Naive thymus-derived CD4-positive, alpha-beta T cell (primary cell): ENCODE measurements at regions of chr4 and their contacts with region 1.

Region 1: GRCh38 chr4:101347557-101348366 is 436 bp upstream of the PPP3CA start:
- DNase-seq: peak; percentile 95 to 99 (median 98)
- ATAC-seq: peak; percentile 92
- H3K4me3 ChIP-seq: peak overlapping the region; percentile 99
- H3K4me3 Mint-ChIP-seq: peak overlapping the region; percentile 93 to 99 (median 98)
- H3K27ac ChIP-seq: peak overlapping the region; percentile 78
- H3K27ac Mint-ChIP-seq: peak overlapping the region; percentile 86 to 96 (median 93)
- H3K4me1 ChIP-seq: peaks cover 7 to 15% of the 10 kb centered on the region in 2 donors
- H3K4me1 Mint-ChIP-seq: peaks cover 23 to 40% (median 35%) of the 10 kb centered on the region in 7 donors
- H3K27me3 ChIP-seq: no peaks in the 10 kb centered on the region
- H3K27me3 Mint-ChIP-seq: peaks cover 5 to 63% (median 17%) of the 10 kb centered on the region in 5 donors

Region 2: GRCh38 chr4:100450449-100450848 is 897.3 kb before region 1 on chr4:
- CTCF ChIA-PET with region 1: no interaction called
- POLR2A ChIA-PET with region 1: no interaction called
- intact Hi-C with region 1: loop called in 1 of 2 experiments (anchors 10 kb)
- DNase-seq: no peak
- ATAC-seq: no peak
- H3K4me3 ChIP-seq: no peak overlapping the region
- H3K4me3 Mint-ChIP-seq: no peak overlapping the region
- H3K27ac ChIP-seq: no peak overlapping the region
- H3K27ac Mint-ChIP-seq: no peak overlapping the region
- H3K4me1 ChIP-seq: no peaks in the 10 kb centered on the region
- H3K4me1 Mint-ChIP-seq: peaks cover 0 to 4% (median 0%) of the 10 kb centered on the region in 7 donors
- H3K27me3 ChIP-seq: no peaks in the 10 kb centered on the region
- H3K27me3 Mint-ChIP-seq: peaks cover 0 to 6% (median 4%) of the 10 kb centered on the region in 5 donors

Region 3: DNA sequence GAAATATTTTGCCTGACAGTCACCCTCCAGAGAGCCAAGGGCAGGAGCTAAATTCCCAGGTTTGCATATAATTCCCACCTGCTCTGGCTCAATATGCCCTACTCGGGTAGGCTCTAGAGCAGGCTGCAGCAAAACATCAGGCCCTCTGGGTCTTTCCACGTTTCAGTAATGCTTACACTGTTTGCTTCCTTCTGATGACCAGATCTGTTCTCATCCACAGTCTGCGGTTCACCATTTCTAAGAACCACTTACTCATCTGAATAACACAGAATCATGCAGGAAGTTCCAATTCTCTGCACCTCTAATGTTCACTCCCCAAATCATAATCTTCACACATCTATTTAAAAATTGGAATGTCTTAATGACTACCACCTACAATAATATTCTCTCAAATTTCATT is 141.8 kb before region 1 on chr4:
- CTCF ChIA-PET with region 1: no interaction called
- POLR2A ChIA-PET with region 1: interaction called, 4 read pairs
- intact Hi-C with region 1: loop called in 1 of 2 experiments (anchors 1 kb)
- DNase-seq: peak in 7 of 9 donors; percentile 10 to 44 (median 18)
- ATAC-seq: peak; percentile 96
- H3K4me3 ChIP-seq: no peak overlapping the region
- H3K4me3 Mint-ChIP-seq: peak overlapping the region in 9 of 10 donors; percentile 3 to 76 (median 55)
- H3K27ac ChIP-seq: no peak overlapping the region
- H3K27ac Mint-ChIP-seq: peak overlapping the region in 4 of 9 donors; percentile 13 to 83 (median 46)
- H3K4me1 ChIP-seq: peaks cover 12 to 17% of the 10 kb centered on the region in 2 donors
- H3K4me1 Mint-ChIP-seq: peaks cover 25 to 52% (median 34%) of the 10 kb centered on the region in 7 donors
- H3K27me3 ChIP-seq: no peaks in the 10 kb centered on the region
- H3K27me3 Mint-ChIP-seq: peaks cover 0 to 3% (median 0%) of the 10 kb centered on the region in 5 donors

Region 4: DNA sequence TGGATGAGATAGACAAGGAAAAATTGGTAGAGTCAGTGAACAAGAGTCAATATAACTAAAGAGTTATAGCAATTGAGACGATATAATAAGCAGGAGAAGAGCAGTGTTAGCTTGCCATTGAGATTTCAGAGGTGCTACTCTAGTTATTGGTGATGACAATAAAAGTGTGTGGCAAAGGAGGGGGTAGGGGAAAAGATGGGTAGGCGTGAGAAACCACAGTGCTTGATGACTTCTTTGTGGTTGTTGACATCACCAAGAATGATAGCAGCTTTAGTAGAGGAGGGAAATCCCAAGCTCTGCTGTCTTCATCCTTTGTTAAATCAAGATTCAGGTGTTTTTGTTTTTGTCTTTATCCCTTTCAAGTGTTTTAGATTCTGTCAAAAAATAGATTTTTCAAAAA is 179.4 kb after region 1 on chr4:
- CTCF ChIA-PET with region 1: interaction called, 3 read pairs
- POLR2A ChIA-PET with region 1: no interaction called
- intact Hi-C with region 1: loop called (anchors 2 to 5 kb)
- DNase-seq: peak in 8 of 9 donors; percentile 44 to 73 (median 62)
- ATAC-seq: peak; percentile 98
- H3K4me3 ChIP-seq: no peak overlapping the region
- H3K4me3 Mint-ChIP-seq: peak overlapping the region in 3 of 10 donors; percentile 7 to 13 (median 9)
- H3K27ac ChIP-seq: no peak overlapping the region
- H3K27ac Mint-ChIP-seq: peak overlapping the region in 3 of 9 donors; percentile 1 to 51 (median 3)
- H3K4me1 ChIP-seq: peaks cover 0 to 11% of the 10 kb centered on the region in 2 donors
- H3K4me1 Mint-ChIP-seq: peaks cover 0 to 22% (median 12%) of the 10 kb centered on the region in 7 donors
- H3K27me3 ChIP-seq: no peaks in the 10 kb centered on the region
- H3K27me3 Mint-ChIP-seq: peaks cover 10 to 51% (median 32%) of the 10 kb centered on the region in 5 donors

Region 5: GRCh38 chr4:102500696-102501446 is 1153.1 kb after region 1 on chr4 and contains the start of gene NFKB1:
- CTCF ChIA-PET with region 1: no interaction called
- POLR2A ChIA-PET with region 1: no interaction called
- intact Hi-C with region 1: loop called in 1 of 2 experiments (anchors 5 kb)
- DNase-seq: peak; percentile 64 to 95 (median 79)
- ATAC-seq: peak; percentile 85
- H3K4me3 ChIP-seq: peak within 1 kb of the TSS; percentile 96
- H3K4me3 Mint-ChIP-seq: peak within 1 kb of the TSS; percentile 93 to 98 (median 97)
- H3K27ac ChIP-seq: peak within 1 kb of the TSS; percentile 100
- H3K27ac Mint-ChIP-seq: peak within 1 kb of the TSS; percentile 95 to 99 (median 96)
- H3K4me1 ChIP-seq: peaks cover 6 to 22% of the 10 kb centered on the region in 2 donors
- H3K4me1 Mint-ChIP-seq: peaks cover 16 to 35% (median 31%) of the 10 kb centered on the region in 7 donors
- H3K27me3 ChIP-seq: no peaks in the 10 kb centered on the region
- H3K27me3 Mint-ChIP-seq: no peaks in the 10 kb centered on the region
- total RNA-seq, gene NFKB1: 80.9 to 167 (median 136) TPM

Region 6: DNA sequence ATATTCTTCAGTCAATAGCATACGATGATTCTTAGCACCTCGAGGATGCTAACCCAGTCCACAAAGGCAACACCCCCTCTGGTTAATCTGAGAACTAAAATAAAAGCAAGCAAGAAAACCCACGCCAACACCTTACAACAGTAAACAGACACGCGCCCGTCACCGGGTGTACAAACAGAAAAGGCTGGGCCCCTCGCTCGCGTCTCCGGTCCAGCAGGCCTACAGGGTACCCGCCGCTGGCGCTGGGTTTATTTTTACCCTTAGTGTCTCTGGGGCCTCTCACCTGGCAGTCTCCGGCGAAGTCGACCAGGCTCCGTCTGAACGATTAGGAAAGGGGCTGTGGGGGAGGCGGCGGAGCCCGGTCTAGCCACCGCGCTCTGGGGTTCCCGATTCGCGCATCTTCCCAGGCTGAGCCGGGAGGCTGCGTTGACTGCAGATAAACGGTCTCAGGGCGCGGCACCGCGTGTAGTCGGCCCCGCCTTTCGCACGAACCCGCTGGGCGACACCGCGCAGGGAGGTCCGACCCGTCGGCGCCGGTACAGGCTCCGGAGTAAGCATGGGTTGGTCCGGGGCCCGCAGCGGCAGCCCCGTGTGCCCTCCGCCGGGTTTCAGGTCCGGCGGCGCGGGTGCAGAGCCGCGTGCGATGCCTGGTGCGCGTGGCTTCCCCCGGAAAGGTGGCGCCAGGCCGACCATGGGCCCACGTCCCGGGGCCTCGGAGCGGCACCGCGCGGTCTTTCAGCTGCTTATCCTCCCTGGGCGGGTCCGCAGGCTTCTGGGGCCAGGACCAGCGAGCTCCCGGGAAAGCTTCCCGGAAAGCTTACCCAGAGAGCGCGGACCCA is 1728.4 kb after region 1 on chr4:
- CTCF ChIA-PET with region 1: no interaction called
- POLR2A ChIA-PET with region 1: no interaction called
- intact Hi-C with region 1: loop called in 1 of 2 experiments (anchors 5 kb)
- DNase-seq: peak; percentile 53 to 75 (median 68)
- ATAC-seq: peak; percentile 83
- H3K4me3 ChIP-seq: peak overlapping the region; percentile 74
- H3K4me3 Mint-ChIP-seq: peak overlapping the region; percentile 77 to 97 (median 95)
- H3K27ac ChIP-seq: peak overlapping the region; percentile 87
- H3K27ac Mint-ChIP-seq: peak overlapping the region; percentile 86 to 99 (median 97)
- H3K4me1 ChIP-seq: peaks cover 10 to 17% of the 10 kb centered on the region in 2 donors
- H3K4me1 Mint-ChIP-seq: peaks cover 23 to 54% (median 47%) of the 10 kb centered on the region in 7 donors
- H3K27me3 ChIP-seq: no peaks in the 10 kb centered on the region
- H3K27me3 Mint-ChIP-seq: no peaks in the 10 kb centered on the region